Activated T-helper 1 cell treated with anti-CD3 and anti-CD28 coated beads, Interleukin-12 subunit alpha, Interleukin-12 subunit beta, Interleukin-2, Interleukin-4 antibody, amounts not matched to agents 30 ng/mL and 10 ng/mL and 1 ng/mL, durations not matched to agents 14 hours and 24 hours and 36 hours (primary cell): ENCODE measurements at regions of chr5 and their contacts with region 1.

Region 1: DNA sequence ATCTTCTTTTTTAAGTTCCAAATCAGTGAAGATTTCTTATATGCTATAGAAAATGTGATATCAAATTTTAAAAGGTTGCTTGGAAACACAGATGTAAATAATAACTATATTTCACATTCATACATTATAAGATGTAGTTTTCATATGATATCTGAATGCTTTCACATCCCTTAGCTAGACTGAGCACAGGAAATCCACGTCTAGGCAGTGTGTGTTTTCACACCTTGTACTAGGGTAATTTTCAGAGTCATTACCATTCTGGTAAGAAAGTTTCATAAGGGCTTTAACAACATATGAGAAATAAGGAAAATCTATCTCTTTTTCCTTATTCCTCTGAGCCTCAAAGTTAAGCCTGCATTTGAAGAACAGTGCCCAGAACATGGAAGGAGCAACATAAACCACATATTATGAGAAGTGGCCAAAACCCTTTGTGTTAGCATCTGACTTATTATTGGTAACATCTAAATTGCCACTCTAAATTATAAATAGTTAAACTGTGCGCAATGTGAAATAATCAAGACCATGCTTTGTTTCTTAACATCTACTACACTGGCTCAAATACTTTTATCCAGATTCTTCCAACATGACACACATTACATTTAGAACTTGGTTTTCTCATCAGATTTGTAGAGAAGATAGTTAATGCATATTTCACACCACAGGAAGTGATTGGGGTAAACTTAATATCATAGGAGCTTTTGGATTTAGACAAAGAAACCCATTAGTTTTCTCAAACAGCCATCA is 113.3 kb downstream of the PPP2R2B start:
- DNase-seq: no peak
- H3K4me3 Mint-ChIP-seq: no peak overlapping the region
- H3K27ac Mint-ChIP-seq: no peak overlapping the region
- H3K4me1 Mint-ChIP-seq: peaks cover 12% of the 10 kb centered on the region
- H3K27me3 Mint-ChIP-seq: peaks cover 3% of the 10 kb centered on the region

Region 2: GRCh38 chr5:146751781-146752401 is 13.4 kb before region 1 on chr5:
- intact Hi-C with region 1: loop called (anchors 1 kb)
- DNase-seq: peak; percentile 58
- H3K4me3 Mint-ChIP-seq: no peak overlapping the region
- H3K27ac Mint-ChIP-seq: peak overlapping the region; percentile 63
- H3K4me1 Mint-ChIP-seq: peaks cover 31% of the 10 kb centered on the region
- H3K27me3 Mint-ChIP-seq: no peaks in the 10 kb centered on the region